Heart right ventricle (tissue), 16 donors: ENCODE measurements at regions of chr2 and their contacts with region 1.

Region 1: GRCh38 chr2:97663965-97664635 is at the start of gene ACTR1B:
- DNase-seq: peak; percentile 97 to 98
- ATAC-seq: peak; percentile 95 to 97 (median 96)
- H3K4me3 ChIP-seq: peak within 1 kb of the TSS; percentile 56 to 87 (median 68)
- H3K27ac ChIP-seq: peak within 1 kb of the TSS; percentile 84 to 100 (median 96)
- H3K4me1 ChIP-seq: peaks cover 0 to 38% (median 31%) of the 10 kb centered on the region in 9 donors
- H3K27me3 ChIP-seq: no peaks in the 10 kb centered on the region
- CTCF ChIP-seq: peak; percentile 35 to 80 (median 56)
- total RNA-seq, gene ACTR1B: 62.8 to 78.1 (median 71.4) TPM

Region 2: GRCh38 chr2:97645695-97646629 is 18.1 kb before region 1 on chr2 and contains the start of gene COX5B:
- intact Hi-C with region 1: loop called in 6 of 10 experiments (anchors 1 to 2 kb)
- DNase-seq: peak; percentile 99 to 100
- ATAC-seq: peak; percentile 99 to 100 (median 99)
- H3K4me3 ChIP-seq: peak within 1 kb of the TSS; percentile 73 to 98 (median 86)
- H3K27ac ChIP-seq: peak within 1 kb of the TSS; percentile 90 to 99 (median 96)
- H3K4me1 ChIP-seq: peaks cover 7 to 32% (median 25%) of the 10 kb centered on the region in 9 donors
- H3K27me3 ChIP-seq: no peaks in the 10 kb centered on the region
- CTCF ChIP-seq: peak in 1 of 9 donors; percentile 3
- total RNA-seq, gene COX5B: 886 to 1,398 (median 1,288) TPM

Region 3: DNA sequence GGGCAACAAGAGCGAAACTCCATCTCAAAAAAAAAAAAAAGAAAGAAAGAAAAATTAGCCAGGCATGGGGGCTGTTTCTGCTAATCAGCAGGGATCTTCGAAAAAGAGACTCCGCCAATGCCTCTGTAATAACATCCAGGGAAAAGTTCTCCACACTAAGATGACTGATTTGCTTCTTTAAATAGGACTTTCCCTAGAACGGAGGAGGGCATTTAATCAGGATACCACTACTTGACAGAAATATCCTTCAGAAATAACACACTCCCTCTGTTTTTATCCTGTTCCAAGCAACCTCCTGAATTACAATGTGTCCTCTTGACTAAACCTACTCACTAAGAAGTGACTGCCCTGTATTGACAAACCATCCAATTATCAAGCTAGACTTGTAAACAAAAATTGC is 1804.1 kb after region 1 on chr2:
- intact Hi-C with region 1: no loop called
- DNase-seq: no peak
- ATAC-seq: peak; percentile 25 to 80 (median 70)
- H3K4me3 ChIP-seq: no peak overlapping the region
- H3K27ac ChIP-seq: peak overlapping the region in 9 of 10 donors; percentile 9 to 68 (median 42)
- H3K4me1 ChIP-seq: peaks cover 0 to 72% (median 44%) of the 10 kb centered on the region in 9 donors
- H3K27me3 ChIP-seq: no peaks in the 10 kb centered on the region
- CTCF ChIP-seq: no peak